Activated naive CD4-positive, alpha-beta T cell treated with anti-CD3 and anti-CD28 coated beads for 36 hours (primary cell): ENCODE measurements at regions of chr14 and their contacts with region 1.

Region 1: GRCh38 chr14:22070119-22071011 is 396.7 kb upstream of the OR4E1 start:
- DNase-seq: peak; percentile 74
- H3K4me3 Mint-ChIP-seq: peak overlapping the region; percentile 90
- H3K27ac Mint-ChIP-seq: peak overlapping the region; percentile 94
- H3K4me1 Mint-ChIP-seq: peaks cover 41% of the 10 kb centered on the region
- H3K27me3 Mint-ChIP-seq: no peaks in the 10 kb centered on the region

Region 2: GRCh38 chr14:22052795-22053194 is 17.6 kb before region 1 on chr14:
- CTCF ChIA-PET with region 1: interaction called, 5 read pairs
- intact Hi-C with region 1: loop called (anchors 2 kb)
- DNase-seq: peak; percentile 55
- H3K4me3 Mint-ChIP-seq: peak overlapping the region; percentile 75
- H3K27ac Mint-ChIP-seq: peak overlapping the region; percentile 84
- H3K4me1 Mint-ChIP-seq: peaks cover 42% of the 10 kb centered on the region
- H3K27me3 Mint-ChIP-seq: no peaks in the 10 kb centered on the region

Region 3: DNA sequence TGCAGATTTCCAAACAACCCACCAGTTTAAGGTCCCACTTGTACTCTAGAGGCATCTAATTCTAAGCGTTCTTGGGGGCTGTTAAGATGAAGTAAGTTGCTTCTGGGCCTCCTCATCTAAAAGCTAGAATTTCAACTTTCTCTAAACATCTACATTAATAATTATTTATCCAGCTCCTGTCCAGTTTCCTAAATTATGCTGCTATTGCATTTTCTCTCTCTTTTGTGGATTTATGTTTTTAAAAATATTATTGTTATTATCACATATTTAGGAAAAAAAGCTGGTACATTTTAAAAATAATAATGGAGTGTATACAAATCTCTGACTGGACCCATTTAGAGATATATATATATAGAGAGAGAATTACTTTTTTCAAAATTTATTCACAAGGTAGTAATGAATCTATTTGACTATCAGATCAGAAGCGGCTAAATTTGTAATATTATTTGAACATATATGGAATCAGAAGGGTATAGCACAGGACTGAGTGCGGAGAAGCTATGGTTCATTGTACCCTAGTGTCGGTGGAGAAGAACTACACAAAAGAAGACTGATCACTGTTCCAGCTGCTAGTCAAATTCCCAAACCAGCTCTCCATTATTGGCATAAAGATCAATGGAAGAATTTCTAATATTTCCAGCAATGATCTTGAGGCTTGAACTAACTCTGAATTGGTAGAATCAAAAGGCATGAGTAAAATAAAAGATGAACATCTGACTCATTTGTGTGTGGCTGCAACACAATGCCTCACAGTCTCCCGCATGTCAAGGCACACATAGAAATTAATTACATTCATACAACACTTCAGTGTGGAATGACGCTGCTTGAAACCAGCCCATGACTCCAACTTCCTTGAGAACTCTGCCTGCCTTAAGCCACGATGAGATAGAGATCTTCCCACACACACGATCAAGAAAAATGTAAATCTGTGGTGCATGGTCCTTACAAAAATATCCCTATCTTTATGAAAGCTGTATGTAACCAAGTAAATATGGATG is 36.6 kb after region 1 on chr14:
- CTCF ChIA-PET with region 1: no interaction called
- intact Hi-C with region 1: loop called (anchors 5 kb)
- DNase-seq: peak; percentile 22
- H3K4me3 Mint-ChIP-seq: peak overlapping the region; percentile 4
- H3K27ac Mint-ChIP-seq: peak overlapping the region; percentile 82
- H3K4me1 Mint-ChIP-seq: peaks cover 28% of the 10 kb centered on the region
- H3K27me3 Mint-ChIP-seq: no peaks in the 10 kb centered on the region

Region 4: GRCh38 chr14:22448905-22449599 is 378.7 kb after region 1 on chr14:
- CTCF ChIA-PET with region 1: no interaction called
- intact Hi-C with region 1: no loop called
- DNase-seq: no peak
- H3K4me3 Mint-ChIP-seq: no peak overlapping the region
- H3K27ac Mint-ChIP-seq: no peak overlapping the region
- H3K4me1 Mint-ChIP-seq: no peaks in the 10 kb centered on the region
- H3K27me3 Mint-ChIP-seq: no peaks in the 10 kb centered on the region